Left lung (tissue), 14 donors: ENCODE measurements at regions of chr7 and their contacts with region 1.

Region 1: GRCh38 chr7:139777948-139778841 is at the start of gene HIPK2:
- DNase-seq: peak; percentile 70 to 94 (median 84)
- ATAC-seq: peak; percentile 78
- H3K4me3 ChIP-seq: peak within 1 kb of the TSS; percentile 78 to 79
- H3K27ac ChIP-seq: peak within 1 kb of the TSS; percentile 87 to 92
- H3K4me1 ChIP-seq: peaks cover 4 to 39% of the 10 kb centered on the region in 2 donors
- H3K27me3 ChIP-seq: peaks cover 0 to 7% of the 10 kb centered on the region in 2 donors
- CTCF ChIP-seq: no peak
- polyA plus RNA-seq, gene HIPK2: 25.1 to 31.0 (median 29.6) TPM

Region 2: DNA sequence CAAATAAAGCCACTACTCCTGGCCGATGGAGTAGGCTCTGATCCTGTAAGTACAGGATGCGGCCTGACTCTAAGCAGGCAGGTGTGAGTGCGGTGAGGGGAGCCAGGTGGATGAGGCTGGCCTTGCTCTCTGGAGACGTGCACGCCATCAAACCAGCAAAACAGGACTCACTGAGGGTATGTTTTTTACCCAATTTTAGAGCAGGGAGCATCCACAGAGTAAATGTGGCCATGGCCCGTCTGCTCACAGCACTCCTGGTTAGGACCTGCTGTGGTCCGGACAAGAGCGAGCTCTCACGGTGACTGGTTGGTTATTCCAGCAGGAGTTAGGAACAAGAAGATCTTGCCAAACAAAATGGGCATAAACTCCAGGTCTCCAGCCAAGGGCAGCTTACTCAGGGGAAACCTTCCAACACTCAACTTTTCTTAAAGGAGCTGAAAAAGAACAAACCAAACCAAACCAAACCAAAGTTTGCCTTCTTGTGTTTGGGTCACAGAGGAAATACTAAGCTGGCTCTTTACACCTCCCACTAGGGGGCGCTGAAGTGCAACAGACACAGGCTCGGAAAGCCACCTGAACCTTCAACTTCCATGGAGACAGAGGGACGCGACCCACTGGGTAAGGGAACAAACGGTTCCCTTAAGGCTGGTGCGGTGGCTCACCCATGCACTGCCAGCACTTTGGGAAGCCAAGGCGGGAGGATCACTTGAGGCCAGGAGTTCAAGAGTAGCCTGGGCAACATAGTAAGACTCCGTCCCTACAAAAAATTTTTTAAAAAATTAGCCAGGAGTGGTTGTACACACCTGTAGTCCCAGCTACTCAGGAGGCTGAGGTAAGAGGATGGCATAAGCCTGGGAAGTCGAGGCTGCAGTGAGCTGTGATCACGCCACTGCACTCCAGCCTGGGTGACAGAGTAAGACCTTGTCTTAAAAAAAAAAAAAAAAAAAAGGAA is 132.3 kb before region 1 on chr7:
- intact Hi-C with region 1: loop called in 1 of 2 experiments (anchors 10 kb)
- DNase-seq: peak; percentile 64 to 86 (median 81)
- ATAC-seq: peak; percentile 86
- H3K4me3 ChIP-seq: no peak overlapping the region
- H3K27ac ChIP-seq: peak overlapping the region in 1 of 2 donors; percentile 80
- H3K4me1 ChIP-seq: peaks cover 0 to 63% of the 10 kb centered on the region in 2 donors
- H3K27me3 ChIP-seq: no peaks in the 10 kb centered on the region
- CTCF ChIP-seq: peak; percentile 82 to 87

Region 3: DNA sequence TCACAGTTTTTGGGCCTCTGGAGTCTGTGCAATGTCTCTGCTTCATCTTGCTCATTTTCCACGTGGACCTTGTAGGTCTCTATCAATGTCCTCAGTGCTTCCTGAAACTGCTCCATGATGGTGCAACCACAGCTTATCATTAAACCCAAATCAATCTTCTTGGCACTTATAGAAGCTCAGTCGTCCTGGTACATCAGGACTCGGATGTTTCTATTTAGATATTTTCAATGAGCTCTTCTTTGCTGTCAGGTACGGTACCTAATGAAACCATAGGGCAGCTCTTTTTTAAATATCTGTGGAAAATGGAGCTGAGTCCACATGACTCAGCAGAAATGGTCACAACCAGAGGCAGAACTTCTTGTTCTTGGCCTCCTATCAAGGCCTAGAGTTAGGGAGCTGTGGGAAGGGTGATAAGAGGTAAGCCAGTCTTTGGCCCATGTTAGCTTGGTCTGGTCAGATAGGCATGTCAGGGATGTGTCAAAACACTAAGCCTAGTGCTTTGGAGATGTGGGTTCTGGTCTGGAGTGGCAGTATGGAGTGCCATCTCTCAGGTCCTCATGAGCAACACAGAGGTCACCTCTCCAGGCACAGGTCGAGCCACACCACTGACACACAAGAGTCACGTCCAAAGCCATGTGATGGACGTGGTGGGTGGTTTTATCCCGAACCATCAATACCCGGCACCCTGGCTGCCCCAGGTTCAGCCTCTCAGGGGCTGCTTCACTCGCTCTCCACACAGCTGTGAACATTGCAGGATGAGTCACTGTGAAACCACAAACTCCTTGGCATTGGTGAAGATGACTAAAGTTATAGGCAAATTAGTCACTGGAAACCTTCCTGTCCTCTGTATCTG is 137.9 kb after region 1 on chr7:
- intact Hi-C with region 1: no loop called
- DNase-seq: peak in 2 of 4 donors; percentile 52 to 75
- ATAC-seq: peak; percentile 87
- H3K4me3 ChIP-seq: no peak overlapping the region
- H3K27ac ChIP-seq: peak overlapping the region; percentile 36 to 66
- H3K4me1 ChIP-seq: peaks cover 15 to 40% of the 10 kb centered on the region in 2 donors
- H3K27me3 ChIP-seq: no peaks in the 10 kb centered on the region
- CTCF ChIP-seq: no peak

Region 4: GRCh38 chr7:140003913-140004382 is 225.8 kb after region 1 on chr7:
- intact Hi-C with region 1: loop called (anchors 5 to 10 kb)
- DNase-seq: peak in 1 of 4 donors; percentile 53
- ATAC-seq: peak; percentile 50
- H3K4me3 ChIP-seq: no peak overlapping the region
- H3K27ac ChIP-seq: no peak overlapping the region
- H3K4me1 ChIP-seq: no peaks in the 10 kb centered on the region
- H3K27me3 ChIP-seq: no peaks in the 10 kb centered on the region
- CTCF ChIP-seq: peak; percentile 25 to 31